ENCODE measurements at regions of chr1 and their contacts with region 1.

Region 1: GRCh38 chr1:32681509-32681908 is 21.1 kb downstream of the SYNC start:
- DNase-seq: no peak
- ATAC-seq: no peak
- H3K4me3 ChIP-seq: no peak overlapping the region
- H3K27ac ChIP-seq: no peak overlapping the region
- H3K4me1 ChIP-seq: no peaks in the 10 kb centered on the region
- H3K27me3 ChIP-seq: no peaks in the 10 kb centered on the region
- CTCF ChIP-seq: no peak
- EP300 ChIP-seq: no peak
- POLR2A ChIP-seq: no peak
- RAD21 ChIP-seq: no peak

Region 2: DNA sequence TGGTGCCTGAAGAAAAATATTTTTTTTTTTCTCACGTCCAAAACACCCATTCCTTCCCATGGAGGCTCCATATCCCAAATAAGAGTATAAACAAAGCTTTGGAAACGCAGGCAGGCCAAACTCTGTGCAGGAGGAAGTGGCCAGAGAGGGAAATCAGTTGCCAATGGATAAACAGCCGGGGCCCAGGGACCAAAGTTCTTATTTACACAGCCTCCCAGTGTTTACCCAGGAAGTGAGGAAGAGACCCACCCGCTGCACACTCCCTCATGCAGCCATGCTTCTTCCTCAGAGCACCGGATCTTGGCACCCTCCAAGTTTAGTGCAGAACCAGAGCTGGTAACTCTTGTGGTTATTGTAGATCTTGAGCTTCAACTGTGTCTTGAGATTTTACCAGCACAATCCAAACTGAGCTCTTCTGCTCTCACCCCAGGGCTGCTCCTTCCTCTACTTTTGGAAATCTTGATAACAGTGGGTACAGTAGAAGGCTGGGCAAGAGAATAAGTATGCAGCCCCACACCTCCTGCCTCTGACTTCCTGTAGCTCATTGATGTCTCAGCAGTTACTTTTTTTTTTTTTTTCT is 359.7 kb before region 1 on chr1:
- CTCF ChIA-PET with region 1: no interaction called
- POLR2A ChIA-PET with region 1: no interaction called
- RAD21 ChIA-PET with region 1: no interaction called
- SMC1A ChIA-PET with region 1: no interaction called
- in situ Hi-C with region 1: no loop called
- intact Hi-C with region 1: no loop called
- DNase-seq: no peak
- ATAC-seq: peak; percentile 9; the same call in 1 of the 3 replicates
- H3K4me3 ChIP-seq: no peak overlapping the region
- H3K27ac ChIP-seq: peak overlapping the region; percentile 69
- H3K4me1 ChIP-seq: peaks cover 54% of the 10 kb centered on the region
- H3K27me3 ChIP-seq: no peaks in the 10 kb centered on the region
- CTCF ChIP-seq: no peak
- EP300 ChIP-seq: no peak
- POLR2A ChIP-seq: no peak
- RAD21 ChIP-seq: no peak

Region 3: DNA sequence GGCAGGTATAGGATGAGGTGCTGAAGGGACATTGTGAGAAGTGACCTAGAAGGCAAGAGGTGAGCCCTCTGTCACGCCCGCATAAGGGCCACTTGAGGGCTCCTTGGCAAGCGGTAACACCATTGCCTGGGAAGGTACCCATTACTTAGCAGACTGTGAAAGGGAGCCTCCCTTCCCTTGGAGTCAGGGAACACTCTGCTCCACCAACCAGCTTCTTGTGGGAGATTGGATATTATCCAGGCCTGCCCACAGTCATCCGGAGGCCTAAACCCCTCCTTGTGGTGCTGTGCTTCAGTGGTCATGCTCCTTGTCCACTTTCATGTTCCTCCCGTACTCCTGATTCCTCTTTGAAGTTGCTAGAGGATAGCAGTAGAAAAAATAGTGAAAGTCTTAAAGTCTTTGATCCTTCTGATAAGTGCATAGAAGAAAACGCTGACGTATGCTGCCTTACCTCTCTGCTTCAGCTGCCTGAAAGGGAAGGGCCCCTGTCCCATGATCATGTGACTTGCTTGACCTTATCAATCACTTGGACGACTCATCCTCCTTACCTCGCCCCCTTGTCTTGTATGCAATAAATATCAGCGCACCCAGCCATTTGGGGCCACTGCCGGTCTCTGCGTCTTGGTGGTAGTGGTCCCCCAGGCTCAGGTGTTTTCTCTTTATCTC is 14.5 kb before region 1 on chr1:
- CTCF ChIA-PET with region 1: no interaction called
- POLR2A ChIA-PET with region 1: interaction called, 10 read pairs
- RAD21 ChIA-PET with region 1: no interaction called
- SMC1A ChIA-PET with region 1: interaction called, 4 read pairs
- in situ Hi-C with region 1: no loop called
- intact Hi-C with region 1: no loop called
- DNase-seq: no peak
- ATAC-seq: no peak
- H3K4me3 ChIP-seq: no peak overlapping the region
- H3K27ac ChIP-seq: no peak overlapping the region
- H3K4me1 ChIP-seq: no peaks in the 10 kb centered on the region
- H3K27me3 ChIP-seq: no peaks in the 10 kb centered on the region
- CTCF ChIP-seq: no peak
- EP300 ChIP-seq: no peak
- POLR2A ChIP-seq: no peak
- RAD21 ChIP-seq: no peak

Region 4: GRCh38 chr1:32719681-32720275 is 38.3 kb after region 1 on chr1:
- CTCF ChIA-PET with region 1: no interaction called
- POLR2A ChIA-PET with region 1: no interaction called
- RAD21 ChIA-PET with region 1: no interaction called
- SMC1A ChIA-PET with region 1: no interaction called
- in situ Hi-C with region 1: no loop called
- intact Hi-C with region 1: no loop called
- DNase-seq: no peak
- ATAC-seq: no peak
- H3K4me3 ChIP-seq: no peak overlapping the region
- H3K27ac ChIP-seq: no peak overlapping the region
- H3K4me1 ChIP-seq: peaks cover 6% of the 10 kb centered on the region; the same call in 1 of the 2 replicates
- H3K27me3 ChIP-seq: no peaks in the 10 kb centered on the region
- CTCF ChIP-seq: no peak
- EP300 ChIP-seq: no peak
- POLR2A ChIP-seq: no peak
- RAD21 ChIP-seq: no peak